ENCODE measurements at regions of chr3 and their contacts with region 1.

Region 1: DNA sequence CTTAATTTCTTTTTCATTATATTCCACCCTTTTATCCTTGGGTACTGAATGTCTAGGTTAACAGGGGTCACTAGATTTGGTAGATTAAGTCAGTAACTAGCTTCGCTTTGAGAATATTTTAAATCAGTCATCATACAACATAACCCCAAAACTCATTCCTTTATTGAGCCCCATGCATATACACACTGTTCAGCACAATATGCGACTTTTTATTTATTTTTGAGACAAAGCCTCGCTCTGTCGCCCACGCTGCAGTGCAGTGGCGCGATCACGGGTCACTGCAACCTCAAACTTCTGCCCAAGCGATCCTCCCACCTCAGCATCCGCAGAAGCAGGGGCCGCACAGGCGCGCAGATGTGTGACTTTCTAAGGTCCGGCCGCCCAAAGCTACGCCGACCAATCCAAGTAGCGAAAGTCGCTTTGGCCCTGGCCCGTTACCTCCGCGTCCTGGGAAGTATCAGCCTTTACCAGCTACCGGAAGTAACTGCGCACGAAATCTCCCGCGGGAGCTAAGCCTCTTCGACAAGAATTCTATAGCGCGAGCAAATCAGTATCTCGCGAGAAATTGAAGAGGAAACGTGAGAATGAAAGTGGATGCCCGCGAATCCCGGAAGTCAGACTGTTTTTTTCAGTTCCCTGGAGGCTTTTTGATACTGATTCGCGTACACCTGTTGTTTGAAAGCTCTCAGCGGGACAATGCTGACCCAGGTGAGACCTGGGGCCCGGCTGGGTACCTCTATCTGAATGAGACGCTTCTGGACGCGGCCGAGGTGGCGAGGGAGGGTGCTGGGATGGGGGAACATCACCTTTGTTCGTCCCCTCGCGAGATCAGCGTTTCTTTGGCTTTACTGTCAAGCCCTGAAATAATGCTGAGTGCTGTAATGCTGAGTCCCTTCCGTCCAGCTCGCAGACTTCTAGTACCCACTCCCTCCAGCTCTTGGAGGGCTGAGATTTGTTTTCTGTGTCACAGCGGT is at the starts of genes DHFR2 and NSUN3:
- DNase-seq: peak; percentile 96 to 97
- ATAC-seq: peak; percentile 97
- H3K4me3 ChIP-seq: peak within 1 kb of the TSS; percentile 60 to 92
- H3K27ac ChIP-seq: peak within 1 kb of the TSS; percentile 57 to 96
- H3K4me1 ChIP-seq: peaks cover 0 to 3% of the 10 kb centered on the region in 2 donors
- H3K27me3 ChIP-seq: no peaks in the 10 kb centered on the region
- total RNA-seq, gene DHFR2: 4.5 to 7.1 TPM
- total RNA-seq, gene NSUN3: 15.5 to 20.0 TPM

Region 2: DNA sequence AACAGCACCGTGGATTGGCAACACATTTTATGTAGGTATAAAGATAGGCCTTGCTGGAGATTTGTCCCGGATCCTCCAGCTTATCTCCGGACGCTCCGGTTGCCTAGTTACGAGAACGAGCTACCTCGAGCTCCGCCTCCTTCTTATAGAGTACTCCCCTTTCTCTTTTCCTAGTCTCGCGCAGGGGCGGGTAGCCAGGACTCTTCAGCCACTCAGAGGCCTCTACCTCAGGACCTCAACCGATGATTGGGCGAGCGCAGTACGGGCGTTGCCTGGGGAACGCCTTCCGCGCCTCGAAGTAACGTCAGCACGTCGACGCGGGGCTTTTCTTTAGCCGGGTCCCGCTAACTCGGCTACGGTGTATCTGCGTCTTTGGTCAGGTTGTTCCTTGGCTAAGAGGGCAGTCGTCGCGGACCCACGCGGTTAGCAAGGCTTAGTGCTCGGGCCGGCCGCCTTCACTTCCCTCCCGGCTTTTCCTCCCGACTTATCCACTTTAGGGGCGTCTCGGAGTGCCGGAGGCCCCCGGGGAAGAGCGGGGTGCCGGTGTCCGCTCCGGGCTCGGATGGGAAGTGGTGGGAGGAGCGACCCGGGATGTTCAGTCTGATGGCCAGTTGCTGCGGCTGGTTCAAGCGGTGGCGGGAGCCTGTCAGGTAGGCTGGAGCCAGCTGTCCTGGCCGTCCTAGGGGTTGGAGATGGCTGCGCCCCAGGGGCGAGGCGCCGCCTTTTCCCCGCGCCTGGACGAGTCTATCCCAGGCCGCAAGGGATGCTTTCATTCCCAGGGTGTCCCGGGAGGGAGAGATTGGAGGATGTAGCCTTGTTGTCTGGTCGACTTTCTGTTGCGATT is 82.7 kb before region 1 on chr3 and contains the start of gene ARL13B:
- intact Hi-C with region 1: loop called in 1 of 2 experiments (anchors 5 kb)
- DNase-seq: peak; percentile 98 to 99
- ATAC-seq: peak; percentile 100
- H3K4me3 ChIP-seq: peak within 1 kb of the TSS; percentile 59 to 69
- H3K27ac ChIP-seq: peak within 1 kb of the TSS in 1 of 2 donors; percentile 71
- H3K4me1 ChIP-seq: no peaks in the 10 kb centered on the region
- H3K27me3 ChIP-seq: no peaks in the 10 kb centered on the region
- total RNA-seq, gene ARL13B: 16.5 to 19.1 TPM

Region 3: DNA sequence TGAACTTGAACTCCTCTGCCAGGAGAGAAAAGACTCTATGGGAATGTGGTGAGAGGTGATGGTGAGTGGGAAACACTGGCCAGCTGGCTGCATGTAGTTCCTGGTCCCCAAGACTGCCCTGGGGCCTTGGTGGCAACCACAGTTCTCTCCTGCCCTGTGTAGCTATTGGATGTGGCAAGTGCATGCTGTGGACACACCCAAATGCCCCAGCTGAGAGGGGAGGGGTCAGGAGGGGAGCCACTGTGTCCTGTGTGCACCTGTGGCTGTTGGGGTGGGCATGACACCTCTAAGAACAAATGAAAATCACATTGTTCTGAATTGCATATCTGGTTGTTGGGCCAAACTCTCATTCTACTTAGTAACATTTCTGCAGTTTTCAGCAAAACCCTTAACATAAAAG is 409.8 kb after region 1 on chr3:
- intact Hi-C with region 1: no loop called
- DNase-seq: no peak
- ATAC-seq: no peak
- H3K4me3 ChIP-seq: no peak overlapping the region
- H3K27ac ChIP-seq: no peak overlapping the region
- H3K4me1 ChIP-seq: no peaks in the 10 kb centered on the region
- H3K27me3 ChIP-seq: no peaks in the 10 kb centered on the region